Psoas muscle (tissue), 8 donors: ENCODE measurements at regions of chr12 and their contacts with region 1.

Region 1: DNA sequence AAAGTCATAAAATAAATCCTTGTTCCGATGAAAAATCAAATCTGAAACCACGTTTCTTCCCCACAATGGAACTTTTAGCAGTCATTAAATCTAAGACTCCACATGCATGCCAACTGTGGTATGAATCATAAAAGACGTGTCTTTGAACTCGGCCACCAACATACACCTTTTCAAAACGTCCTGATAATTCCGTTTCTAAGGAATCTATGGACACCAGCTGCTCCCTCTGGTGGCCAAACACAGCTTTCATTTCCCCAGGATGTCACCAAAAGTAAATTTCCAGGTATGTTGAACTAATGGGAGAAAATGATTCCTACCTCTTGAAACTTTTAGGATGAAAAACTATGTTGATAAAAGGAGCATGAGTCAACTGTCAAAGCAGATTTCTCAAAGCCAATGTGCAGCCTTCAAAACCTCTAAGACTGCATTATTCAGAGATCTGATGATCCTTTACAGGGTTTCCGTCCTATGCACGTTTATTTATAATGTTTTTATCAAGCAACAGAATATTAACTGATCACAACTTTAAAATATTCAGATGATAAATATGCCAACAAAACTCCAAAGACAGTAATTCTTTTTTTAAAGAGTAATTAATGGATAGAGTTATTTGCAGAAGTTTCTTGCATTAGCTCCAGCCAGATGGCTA is 96.2 kb downstream of the CIT start:
- DNase-seq: peak in 1 of 2 donors; percentile 21
- ATAC-seq: no peak
- H3K4me3 ChIP-seq: no peak overlapping the region
- H3K27ac ChIP-seq: no peak overlapping the region
- H3K4me1 ChIP-seq: no peaks in the 10 kb centered on the region
- H3K27me3 ChIP-seq: no peaks in the 10 kb centered on the region
- CTCF ChIP-seq: peak; percentile 76

Region 2: DNA sequence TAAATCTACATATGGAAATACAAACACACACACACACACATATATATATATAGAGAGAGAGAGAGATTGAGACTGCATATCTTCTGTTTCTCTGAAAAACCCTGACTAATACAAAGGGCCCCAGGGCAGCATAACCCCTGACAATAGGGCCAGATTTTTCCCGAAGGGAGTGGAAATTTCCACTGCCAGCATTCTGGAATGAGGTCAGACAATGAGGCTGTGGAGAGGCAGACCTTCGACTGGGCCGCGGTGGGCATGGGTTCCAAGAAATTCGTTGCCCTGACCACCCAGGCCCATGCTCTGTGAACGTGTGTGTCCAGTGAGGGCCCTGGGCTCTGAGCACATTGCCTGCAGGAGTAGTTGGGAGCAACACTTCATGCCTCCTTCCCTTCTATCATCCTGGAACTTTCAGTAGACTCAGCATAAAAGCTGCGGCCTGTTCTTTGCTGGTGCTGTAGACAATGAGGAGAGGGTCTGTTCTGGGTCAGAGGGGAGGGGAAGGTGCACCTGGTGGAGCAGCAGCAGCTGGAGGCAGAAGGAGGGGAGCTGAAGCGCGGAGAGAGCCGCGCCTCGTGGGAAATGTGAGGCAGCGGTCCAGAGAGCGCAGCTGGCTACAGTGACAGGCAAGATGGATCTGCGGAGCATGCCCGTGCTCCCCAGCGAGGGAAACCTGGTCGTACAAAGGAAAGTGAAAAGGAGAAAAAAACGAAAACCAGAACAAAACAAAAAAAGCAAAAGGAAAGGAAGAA is 472.0 kb before region 1 on chr12:
- intact Hi-C with region 1: no loop called
- DNase-seq: peak; percentile 25 to 63
- ATAC-seq: no peak
- H3K4me3 ChIP-seq: no peak overlapping the region
- H3K27ac ChIP-seq: no peak overlapping the region
- H3K4me1 ChIP-seq: no peaks in the 10 kb centered on the region
- H3K27me3 ChIP-seq: no peaks in the 10 kb centered on the region
- CTCF ChIP-seq: no peak

Region 3: DNA sequence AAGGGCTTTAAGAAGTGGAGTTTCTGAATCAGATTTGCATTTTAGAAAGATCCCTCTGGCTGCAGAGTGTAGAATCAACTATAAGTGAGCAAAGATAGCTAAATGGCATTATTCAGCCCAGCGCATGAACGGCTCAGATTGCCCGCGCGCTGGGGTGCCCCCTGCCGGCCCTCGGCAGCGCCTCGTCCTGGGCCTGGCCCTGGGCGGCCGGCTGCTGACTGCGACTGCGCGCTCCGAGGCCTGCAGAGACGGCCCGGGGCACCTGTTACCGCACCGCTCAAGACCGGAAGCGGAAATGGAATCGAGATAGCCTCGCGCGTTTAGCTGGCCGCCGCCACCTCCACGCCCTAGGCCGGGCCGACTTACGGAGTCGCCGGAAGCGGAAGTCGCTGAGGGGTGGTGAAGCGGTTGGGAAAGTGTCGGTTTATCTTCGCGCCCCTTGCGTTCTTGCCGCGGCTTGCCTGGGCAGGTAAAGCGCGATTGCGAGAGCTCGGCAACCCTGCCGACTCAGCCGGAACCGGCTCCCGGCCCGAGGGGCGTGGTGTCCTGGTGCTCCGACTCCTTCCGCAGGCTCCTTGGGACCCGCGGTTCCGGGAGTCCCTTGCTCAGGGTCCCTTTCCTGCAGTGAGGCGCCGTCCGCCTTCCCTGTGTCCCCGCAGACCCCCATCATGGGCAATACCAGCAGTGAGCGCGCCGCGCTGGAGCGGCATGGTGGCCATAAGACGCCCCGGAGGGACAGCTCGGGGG is 113.2 kb before region 1 on chr12 and contains the start of gene PRKAB1:
- intact Hi-C with region 1: loop called (anchors 5 to 10 kb)
- DNase-seq: peak; percentile 97 to 98
- ATAC-seq: peak; percentile 98 to 100 (median 99)
- H3K4me3 ChIP-seq: peak within 1 kb of the TSS; percentile 94
- H3K27ac ChIP-seq: peak within 1 kb of the TSS; percentile 96
- H3K4me1 ChIP-seq: peaks cover 19% of the 10 kb centered on the region
- H3K27me3 ChIP-seq: no peaks in the 10 kb centered on the region
- CTCF ChIP-seq: peak; percentile 89
- total RNA-seq, gene PRKAB1: 9.0 to 16.7 (median 10.9) TPM

Region 4: DNA sequence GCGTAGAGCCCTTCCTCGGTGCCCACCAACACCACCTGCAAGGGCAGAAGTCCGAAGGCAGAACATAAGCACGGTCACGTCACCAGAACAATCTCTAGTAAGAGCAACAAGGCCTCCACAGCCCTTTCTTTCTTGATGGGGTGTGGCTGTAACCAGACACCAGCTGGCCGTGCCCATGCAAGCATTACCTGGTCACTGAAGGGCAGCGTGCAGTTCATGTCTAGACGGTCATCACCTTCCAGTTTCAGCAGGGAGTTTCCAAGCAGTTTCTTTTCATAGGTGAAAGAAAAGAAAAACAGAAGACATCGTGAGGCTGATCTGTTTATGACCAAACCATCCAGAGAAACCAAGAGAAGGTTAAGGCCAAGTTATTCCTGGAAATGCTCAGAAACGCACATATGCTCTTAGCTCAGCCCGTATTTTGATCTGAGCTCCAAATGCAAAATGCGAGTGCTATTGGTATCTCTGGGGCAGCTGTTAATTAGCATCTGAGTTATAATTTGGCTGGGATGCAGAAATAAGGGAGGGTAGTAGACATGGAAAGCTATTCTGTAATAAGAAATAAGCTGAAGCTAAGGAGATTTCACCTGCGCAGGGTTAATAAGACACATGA is 70.5 kb before region 1 on chr12:
- intact Hi-C with region 1: loop called in 1 of 2 experiments (anchors 5 kb)
- DNase-seq: no peak
- ATAC-seq: peak in 1 of 4 donors; percentile 84
- H3K4me3 ChIP-seq: no peak overlapping the region
- H3K27ac ChIP-seq: no peak overlapping the region
- H3K4me1 ChIP-seq: peaks cover 3% of the 10 kb centered on the region
- H3K27me3 ChIP-seq: no peaks in the 10 kb centered on the region
- CTCF ChIP-seq: no peak

Region 5: GRCh38 chr12:119758722-119759121 is 22.2 kb before region 1 on chr12:
- intact Hi-C with region 1: no loop called
- DNase-seq: no peak
- ATAC-seq: no peak
- H3K4me3 ChIP-seq: no peak overlapping the region
- H3K27ac ChIP-seq: no peak overlapping the region
- H3K4me1 ChIP-seq: no peaks in the 10 kb centered on the region
- H3K27me3 ChIP-seq: no peaks in the 10 kb centered on the region
- CTCF ChIP-seq: no peak

Region 6: GRCh38 chr12:119949145-119949544 is 168.2 kb after region 1 on chr12:
- intact Hi-C with region 1: no loop called
- DNase-seq: no peak
- ATAC-seq: no peak
- H3K4me3 ChIP-seq: no peak overlapping the region
- H3K27ac ChIP-seq: no peak overlapping the region
- H3K4me1 ChIP-seq: no peaks in the 10 kb centered on the region
- H3K27me3 ChIP-seq: no peaks in the 10 kb centered on the region
- CTCF ChIP-seq: no peak